Breast epithelium (tissue), 4 donors: ENCODE measurements at regions of chr4 and their contacts with region 1.

Region 1: DNA sequence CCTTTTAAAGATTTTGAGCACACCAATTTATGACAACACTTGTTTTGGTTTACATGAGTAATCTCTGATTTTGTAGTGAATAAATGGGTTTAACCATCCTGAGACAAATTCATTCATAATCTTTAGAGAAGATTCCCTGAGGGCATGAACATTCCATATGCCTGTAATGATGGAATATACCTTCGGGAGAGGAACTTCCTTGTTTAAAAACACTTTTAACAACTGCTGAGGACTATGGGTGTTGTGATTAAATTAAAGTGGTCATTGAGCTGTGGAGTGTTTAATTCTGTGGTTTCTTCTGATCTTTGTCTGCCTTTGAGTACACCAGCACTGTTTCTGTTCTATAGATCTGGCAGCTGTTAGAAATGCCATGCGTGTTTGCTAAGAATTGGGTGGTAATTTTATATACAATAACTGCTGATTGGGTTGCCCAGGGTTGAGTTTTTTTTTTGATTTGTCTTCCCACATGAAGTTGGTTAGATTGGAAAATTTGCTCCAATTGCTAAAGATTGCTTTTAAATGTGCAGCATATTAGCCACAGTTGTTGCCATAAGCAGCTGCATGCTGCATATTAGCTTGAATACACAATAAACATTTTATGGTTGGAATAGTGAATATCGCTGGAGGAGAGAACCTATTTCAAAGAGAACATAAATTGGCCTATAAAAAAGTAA is 86.8 kb downstream of the DCLK2 start:
- DNase-seq: no peak
- H3K4me3 ChIP-seq: no peak overlapping the region
- H3K27ac ChIP-seq: no peak overlapping the region
- H3K4me1 ChIP-seq: no peaks in the 10 kb centered on the region
- H3K27me3 ChIP-seq: no peaks in the 10 kb centered on the region
- CTCF ChIP-seq: no peak
- POLR2A ChIP-seq: no peak

Region 2: DNA sequence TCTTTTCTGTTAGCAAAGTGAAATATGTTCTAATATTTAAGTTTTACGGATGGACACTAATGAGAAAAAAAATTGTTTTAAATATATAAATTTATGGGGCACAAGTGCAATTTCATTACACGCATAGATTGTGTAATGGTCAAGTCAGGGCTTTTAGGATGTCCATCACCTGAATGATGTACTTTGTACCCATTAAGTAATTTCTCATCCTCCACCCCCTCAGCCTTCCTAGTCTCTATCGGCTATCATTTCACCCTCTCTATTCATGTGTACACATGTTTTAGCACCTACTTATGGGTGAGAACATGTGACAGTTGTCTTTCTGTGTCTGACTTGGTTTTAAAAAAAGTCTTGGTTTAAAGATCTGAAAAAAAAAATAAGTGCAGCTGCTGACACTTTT is 965.5 kb before region 1 on chr4:
- intact Hi-C with region 1: loop called (anchors 10 kb)
- DNase-seq: no peak
- H3K4me3 ChIP-seq: no peak overlapping the region
- H3K27ac ChIP-seq: no peak overlapping the region
- H3K4me1 ChIP-seq: no peaks in the 10 kb centered on the region
- H3K27me3 ChIP-seq: no peaks in the 10 kb centered on the region
- CTCF ChIP-seq: no peak
- POLR2A ChIP-seq: no peak

Region 3: GRCh38 chr4:150149381-150149780 is 15.7 kb before region 1 on chr4:
- intact Hi-C with region 1: no loop called
- DNase-seq: no peak
- H3K4me3 ChIP-seq: no peak overlapping the region
- H3K27ac ChIP-seq: no peak overlapping the region
- H3K4me1 ChIP-seq: no peaks in the 10 kb centered on the region
- H3K27me3 ChIP-seq: no peaks in the 10 kb centered on the region
- CTCF ChIP-seq: no peak
- POLR2A ChIP-seq: no peak

Region 4: DNA sequence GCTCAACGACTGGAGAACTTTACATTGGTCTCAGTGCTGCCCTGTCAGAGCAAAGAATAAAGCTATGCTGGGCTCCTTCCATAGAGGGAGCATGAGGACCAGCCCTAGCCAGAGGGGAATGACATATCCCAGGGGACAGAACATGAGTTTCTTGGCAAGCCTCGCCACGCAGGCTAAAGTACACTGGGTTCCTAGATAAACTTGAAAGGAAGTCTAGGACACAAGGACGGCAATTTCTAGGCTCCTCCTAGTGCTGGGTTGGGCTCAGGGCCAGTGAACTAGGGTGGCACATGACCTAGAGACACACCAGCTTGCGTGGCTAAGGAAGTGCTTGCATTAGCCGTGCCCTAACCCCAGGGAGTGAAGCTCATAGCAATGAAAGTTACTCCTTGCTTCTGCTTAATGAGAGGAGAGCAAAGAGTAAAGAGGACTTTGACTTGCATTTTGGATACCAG is 557.8 kb after region 1 on chr4:
- intact Hi-C with region 1: no loop called
- DNase-seq: peak; percentile 67 to 80
- H3K4me3 ChIP-seq: no peak overlapping the region
- H3K27ac ChIP-seq: peak overlapping the region in 1 of 2 donors; percentile 15
- H3K4me1 ChIP-seq: no peaks in the 10 kb centered on the region
- H3K27me3 ChIP-seq: no peaks in the 10 kb centered on the region
- CTCF ChIP-seq: no peak
- POLR2A ChIP-seq: no peak